Activated T-helper 1 cell treated with anti-CD3 and anti-CD28 coated beads, Interleukin-12 subunit alpha, Interleukin-12 subunit beta, Interleukin-2, Interleukin-4 antibody, amounts not matched to agents 30 ng/mL and 10 ng/mL and 1 ng/mL, durations not matched to agents 14 hours and 24 hours and 36 hours (primary cell): ENCODE measurements at regions of chr1 and their contacts with region 1.

Region 1: DNA sequence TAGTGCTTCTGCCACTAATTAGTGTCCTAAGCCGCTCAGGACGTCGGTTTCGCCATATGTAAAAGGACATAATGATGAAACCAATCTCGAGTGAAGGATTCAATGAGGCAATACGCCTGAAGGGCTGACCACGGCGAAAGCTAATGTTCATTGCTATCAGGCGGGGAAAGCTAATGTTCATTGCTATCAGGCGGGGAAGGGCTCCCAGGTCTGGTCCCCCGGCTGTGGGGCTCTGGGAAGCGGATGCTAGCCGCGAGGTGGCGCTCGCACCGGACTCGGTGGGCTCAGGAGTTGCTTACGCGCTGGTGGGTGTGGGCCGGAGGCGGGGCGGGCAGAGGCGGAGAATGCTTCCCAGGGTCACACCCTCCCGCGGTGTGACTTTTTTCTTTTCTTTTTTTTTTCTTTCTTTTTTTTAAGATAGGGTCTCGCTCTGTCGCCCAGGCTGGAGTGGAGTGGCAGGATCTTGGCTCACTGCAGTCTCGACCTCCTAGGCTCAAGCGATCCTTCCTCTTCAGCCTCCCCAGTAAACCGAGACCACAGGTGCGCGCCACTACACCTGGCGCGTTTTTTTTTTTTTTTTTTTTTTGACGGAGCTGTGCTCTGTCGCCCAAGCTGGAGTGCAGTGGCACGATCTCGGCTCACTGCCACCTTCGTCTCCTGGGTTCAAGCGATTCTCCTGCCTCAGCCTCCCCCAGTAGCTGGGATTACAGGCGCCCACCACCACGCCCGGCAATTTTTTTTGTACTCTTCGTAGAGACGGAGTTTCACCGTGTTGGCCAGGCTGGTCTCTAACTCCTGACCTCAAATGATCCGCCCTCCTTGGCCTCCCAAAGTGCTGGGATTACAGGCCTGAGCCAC is 1.1 kb upstream of the PEAR1 start:
- DNase-seq: peak; percentile 80
- H3K4me3 Mint-ChIP-seq: peak overlapping the region; percentile 61
- H3K27ac Mint-ChIP-seq: no peak overlapping the region
- H3K4me1 Mint-ChIP-seq: peaks cover 8% of the 10 kb centered on the region
- H3K27me3 Mint-ChIP-seq: peaks cover 58% of the 10 kb centered on the region

Region 2: GRCh38 chr1:156797212-156797871 is 95.1 kb before region 1 on chr1:
- intact Hi-C with region 1: loop called (anchors 1 kb)
- DNase-seq: peak; percentile 43
- H3K4me3 Mint-ChIP-seq: no peak overlapping the region
- H3K27ac Mint-ChIP-seq: no peak overlapping the region
- H3K4me1 Mint-ChIP-seq: peaks cover 27% of the 10 kb centered on the region
- H3K27me3 Mint-ChIP-seq: no peaks in the 10 kb centered on the region

Region 3: GRCh38 chr1:156860113-156860627 is 32.2 kb before region 1 on chr1:
- intact Hi-C with region 1: loop called (anchors 1 kb)
- DNase-seq: peak; percentile 53
- H3K4me3 Mint-ChIP-seq: peak overlapping the region; percentile 88
- H3K27ac Mint-ChIP-seq: peak overlapping the region; percentile 80
- H3K4me1 Mint-ChIP-seq: peaks cover 56% of the 10 kb centered on the region
- H3K27me3 Mint-ChIP-seq: peaks cover 15% of the 10 kb centered on the region

Region 4: GRCh38 chr1:156961709-156962108 is 69.3 kb after region 1 on chr1:
- intact Hi-C with region 1: loop called (anchors 2 kb)
- DNase-seq: peak; percentile 30
- H3K4me3 Mint-ChIP-seq: no peak overlapping the region
- H3K27ac Mint-ChIP-seq: no peak overlapping the region
- H3K4me1 Mint-ChIP-seq: peaks cover 61% of the 10 kb centered on the region
- H3K27me3 Mint-ChIP-seq: peaks cover 8% of the 10 kb centered on the region

Region 5: GRCh38 chr1:157240495-157241184 is 348.2 kb after region 1 on chr1:
- intact Hi-C with region 1: no loop called
- DNase-seq: no peak
- H3K4me3 Mint-ChIP-seq: no peak overlapping the region
- H3K27ac Mint-ChIP-seq: no peak overlapping the region
- H3K4me1 Mint-ChIP-seq: no peaks in the 10 kb centered on the region
- H3K27me3 Mint-ChIP-seq: peaks cover 5% of the 10 kb centered on the region